ENCODE measurements at regions of chr9 and their contacts with region 1.

Region 1: DNA sequence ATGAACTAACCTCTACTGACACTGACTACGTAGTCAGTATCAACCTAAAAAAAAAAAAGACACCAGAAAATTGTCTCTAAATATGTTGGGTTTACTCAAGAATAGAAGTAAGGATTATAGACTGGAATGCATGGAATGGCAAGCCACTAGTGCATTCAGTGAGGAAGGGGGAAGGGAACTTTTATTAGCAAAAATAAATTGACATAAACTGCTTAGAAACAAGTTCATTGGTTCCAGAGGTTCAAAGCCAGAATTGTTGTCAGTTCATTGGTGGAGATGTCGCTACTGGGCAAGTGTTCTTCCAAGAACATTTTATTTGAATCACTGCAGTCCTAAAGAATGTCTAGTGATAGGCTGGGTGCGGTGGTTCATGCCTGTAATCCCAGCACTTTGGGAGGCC is 26.1 kb upstream of the AOPEP start:
- DNase-seq: no peak
- H3K4me3 ChIP-seq: no peak overlapping the region
- H3K27ac ChIP-seq: no peak overlapping the region
- H3K4me1 ChIP-seq: no peaks in the 10 kb centered on the region
- H3K27me3 ChIP-seq: no peaks in the 10 kb centered on the region
- CTCF ChIP-seq: no peak
- POLR2A ChIP-seq: no peak

Region 2: GRCh38 chr9:94480205-94480604 is 220.2 kb before region 1 on chr9:
- intact Hi-C with region 1: loop called (anchors 10 kb)
- DNase-seq: no peak
- H3K4me3 ChIP-seq: no peak overlapping the region
- H3K27ac ChIP-seq: no peak overlapping the region
- H3K4me1 ChIP-seq: no peaks in the 10 kb centered on the region
- H3K27me3 ChIP-seq: no peaks in the 10 kb centered on the region
- CTCF ChIP-seq: no peak
- POLR2A ChIP-seq: no peak